ENCODE measurements at regions of chr6 and their contacts with region 1.

Region 1: DNA sequence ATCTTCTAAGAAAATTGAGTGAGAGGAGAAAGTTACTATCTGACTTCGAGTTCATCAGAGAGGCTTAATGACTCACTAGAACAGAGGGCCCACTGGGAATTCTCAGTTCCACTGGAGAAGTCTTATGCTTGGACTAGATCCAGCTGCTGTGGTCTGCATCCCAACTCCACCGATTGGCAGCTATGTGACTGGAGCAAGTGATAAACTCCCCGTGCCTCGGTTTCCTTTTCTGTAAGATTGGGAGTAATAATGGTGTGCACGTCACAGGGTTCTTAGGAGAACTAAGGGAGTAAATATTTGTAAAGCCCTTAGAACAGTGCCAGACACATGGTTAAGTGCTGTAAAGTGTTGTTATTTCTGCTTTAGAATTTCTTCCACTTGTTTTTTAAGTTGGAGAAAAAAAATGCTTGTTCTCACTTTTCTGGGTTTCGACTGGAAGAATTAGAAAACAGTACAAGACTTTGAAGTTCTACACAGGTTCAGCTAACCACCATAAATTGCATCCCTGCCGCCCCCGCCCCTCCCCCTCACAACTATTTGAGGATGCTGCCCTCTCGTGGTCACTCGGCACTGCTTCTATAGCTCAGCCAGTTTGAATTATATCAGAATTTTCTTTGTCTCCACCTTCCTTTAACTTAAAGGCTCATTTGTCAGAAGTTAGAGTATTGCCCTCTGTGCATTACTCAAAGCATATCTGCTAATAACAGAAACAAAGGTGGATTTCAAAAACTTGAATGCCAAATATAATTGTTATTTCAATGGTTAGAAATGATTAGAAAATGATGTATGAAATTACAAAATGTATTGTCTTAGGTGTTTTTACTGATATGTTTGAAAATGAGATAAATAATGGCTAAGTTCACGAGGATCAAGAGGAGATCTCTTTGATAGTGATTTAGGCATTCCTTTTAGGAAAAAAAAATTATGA is 95.0 kb upstream of the IFNGR1 start:
- DNase-seq: peak; percentile 64
- CTCF ChIP-seq: peak; percentile 82

Region 2: DNA sequence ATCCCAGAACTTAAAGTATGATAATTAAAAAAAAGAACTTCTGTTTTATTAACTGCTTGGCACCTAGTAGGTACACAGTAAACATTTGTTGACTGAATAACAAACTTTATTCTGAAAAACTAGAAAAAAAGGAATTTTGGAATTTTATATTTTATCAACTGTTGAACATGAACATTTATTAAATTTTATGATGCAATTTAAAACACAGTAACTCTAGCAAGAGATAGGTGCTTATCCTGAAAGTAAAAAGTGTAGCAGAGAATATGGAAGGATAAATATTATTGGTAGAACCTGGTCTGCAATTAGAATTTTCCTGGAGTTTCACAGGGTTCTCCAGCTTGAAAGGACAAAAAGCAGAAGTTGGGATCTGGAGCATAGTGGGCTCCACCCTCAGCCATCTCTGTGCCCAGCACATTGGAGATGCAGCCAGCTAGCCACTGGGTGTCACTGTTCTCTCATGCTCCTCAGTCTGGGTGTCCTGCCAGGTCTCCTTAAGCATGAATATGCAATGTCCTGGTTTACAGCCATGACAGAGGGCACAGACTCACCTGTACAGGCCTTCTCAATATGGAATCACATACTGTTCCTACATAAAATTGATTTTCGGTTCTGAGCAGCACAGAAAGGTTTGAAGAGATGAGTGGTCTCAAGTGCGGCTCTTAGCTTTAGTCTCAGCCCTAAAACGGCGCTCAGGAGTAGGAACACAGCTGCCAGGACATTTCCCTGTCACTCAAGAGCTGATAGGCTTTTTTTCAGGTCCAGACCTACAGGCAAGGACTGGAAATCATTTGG is 237.7 kb before region 1 on chr6:
- CTCF ChIA-PET with region 1: interaction called, 24 read pairs
- POLR2A ChIA-PET with region 1: no interaction called
- DNase-seq: peak; percentile 70
- CTCF ChIP-seq: peak; percentile 89

Region 3: DNA sequence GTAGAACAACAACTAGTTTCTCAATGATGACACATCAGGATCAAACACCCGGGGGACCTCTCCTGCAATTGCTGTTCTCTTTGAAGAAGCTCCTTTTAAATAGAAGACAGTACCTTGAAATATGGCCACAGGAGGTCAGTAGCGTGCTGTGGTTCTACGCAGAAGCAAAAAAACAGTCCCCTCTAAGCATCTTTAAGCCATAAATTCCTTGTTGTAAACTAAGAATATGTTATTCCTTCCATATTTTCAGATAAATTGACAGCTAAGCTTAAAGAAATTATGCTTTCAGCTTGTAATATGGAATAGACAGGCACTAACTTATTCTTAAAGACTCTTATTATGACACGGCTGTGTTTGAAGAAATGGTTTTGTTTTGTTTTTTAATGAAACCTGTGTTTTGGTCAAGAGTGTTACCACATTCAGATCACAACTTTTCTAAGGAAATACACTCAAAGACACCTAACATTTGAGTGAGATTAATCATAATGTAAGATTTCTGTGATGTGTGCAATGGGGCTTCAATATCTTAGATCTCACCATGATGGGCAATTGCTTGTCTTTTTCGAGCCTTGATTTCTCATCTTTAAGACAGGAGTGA is 219.7 kb before region 1 on chr6:
- CTCF ChIA-PET with region 1: interaction called, 40 read pairs
- POLR2A ChIA-PET with region 1: no interaction called
- DNase-seq: peak; percentile 43
- CTCF ChIP-seq: peak; percentile 66

Region 4: DNA sequence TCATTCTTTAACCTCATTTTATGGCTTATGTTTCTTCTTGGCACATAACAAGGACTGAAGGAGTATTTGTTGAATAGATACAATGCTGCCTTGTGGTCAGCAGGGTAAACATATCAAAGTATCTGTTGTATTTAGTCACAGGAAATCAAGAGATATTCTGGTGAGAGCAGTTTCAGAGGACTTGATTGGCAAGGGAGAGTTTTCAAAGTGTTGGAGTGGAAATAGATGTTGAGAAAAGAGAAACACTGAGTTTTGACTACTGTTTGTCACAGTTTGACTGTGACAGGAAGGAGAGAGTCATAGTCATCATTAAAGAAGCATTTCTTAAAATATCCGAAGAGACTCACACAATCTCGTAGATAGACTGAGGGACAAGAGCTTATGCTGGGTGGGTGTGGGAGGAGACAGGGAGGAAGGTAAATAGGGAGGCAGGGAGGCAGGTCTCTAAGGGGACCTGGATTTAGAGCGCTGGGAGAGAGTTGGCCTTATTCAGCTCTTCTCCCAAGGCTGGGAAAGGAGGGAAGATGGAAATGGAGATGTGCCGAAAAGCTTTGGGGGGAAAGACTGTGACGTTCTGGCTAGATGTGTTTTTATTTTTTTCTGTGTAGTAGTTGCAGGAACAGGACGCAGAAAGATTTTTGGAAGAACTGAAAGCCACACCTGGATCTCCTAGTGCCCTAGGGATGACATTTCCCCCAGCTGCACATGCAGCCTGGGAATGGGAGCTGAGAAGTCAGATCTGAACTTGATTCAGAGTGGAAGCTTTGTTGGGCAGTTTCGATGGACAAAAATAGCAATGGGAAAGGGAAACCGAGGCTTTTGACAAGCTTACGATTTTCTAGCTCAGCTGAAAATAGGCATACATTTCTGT is 30.0 kb before region 1 on chr6:
- CTCF ChIA-PET with region 1: interaction called, 15 read pairs
- POLR2A ChIA-PET with region 1: no interaction called
- DNase-seq: peak; percentile 56
- CTCF ChIP-seq: no peak

Region 5: DNA sequence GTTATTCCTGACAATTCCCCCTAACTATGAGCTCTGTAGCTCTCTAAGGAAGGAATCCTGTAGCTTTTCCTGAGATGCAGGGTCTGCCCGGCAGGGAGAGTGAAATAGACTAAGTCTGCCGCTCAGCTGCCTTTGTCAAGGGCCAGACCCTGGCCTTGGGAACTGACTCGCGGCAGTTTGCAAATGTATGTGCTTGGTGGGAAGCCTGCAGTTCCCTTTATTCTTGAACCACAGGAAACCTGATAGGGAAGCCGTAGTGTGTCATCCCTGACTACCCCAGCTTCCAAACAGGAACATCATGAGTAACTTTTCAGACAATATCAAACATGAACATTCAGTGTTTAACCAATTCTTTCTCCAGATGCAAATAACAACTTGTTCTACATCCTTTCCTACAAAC is 16.3 kb before region 1 on chr6:
- CTCF ChIA-PET with region 1: interaction called, 16 read pairs
- POLR2A ChIA-PET with region 1: no interaction called
- DNase-seq: no peak
- CTCF ChIP-seq: no peak

Region 6: DNA sequence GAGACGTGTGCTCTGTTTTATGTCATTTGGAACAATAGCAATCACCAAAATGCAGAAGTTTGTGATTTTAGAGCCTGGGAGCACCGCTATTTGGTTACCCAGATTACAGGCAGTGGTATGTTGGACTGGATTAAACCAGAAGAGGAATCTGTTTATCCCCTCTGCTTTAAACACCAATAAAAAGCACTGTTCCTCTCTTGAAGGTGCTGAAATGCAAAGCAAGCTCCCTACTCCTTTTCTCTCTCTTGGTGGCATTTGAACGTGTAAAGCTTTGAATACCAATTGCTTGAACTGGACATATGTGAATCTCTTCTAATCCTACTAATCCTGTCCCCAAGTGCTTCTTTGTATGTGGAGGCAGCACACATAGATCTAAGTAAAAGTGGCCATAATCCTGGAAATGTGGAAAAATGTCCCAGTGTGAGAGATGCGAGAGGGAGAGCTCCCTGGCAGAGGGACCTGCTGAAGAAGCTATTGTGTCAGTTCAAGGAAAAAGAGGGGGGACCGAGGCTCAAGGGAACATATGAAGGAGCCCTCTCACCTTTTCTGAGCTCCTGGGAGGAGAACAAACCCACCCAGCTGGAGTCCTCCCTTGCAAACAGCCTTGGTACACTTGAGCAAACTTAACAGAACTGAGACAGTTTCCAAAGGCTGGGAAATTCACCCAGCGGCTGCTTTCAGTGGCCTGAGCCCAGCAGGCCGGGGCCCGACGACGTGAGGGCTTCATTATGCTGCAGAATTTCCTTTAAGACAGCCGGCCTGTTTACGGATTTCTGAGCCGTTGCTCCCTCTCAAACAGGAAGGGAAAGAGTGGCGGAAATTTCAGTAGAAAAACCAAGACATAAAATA is 198.8 kb after region 1 on chr6:
- CTCF ChIA-PET with region 1: no interaction called
- POLR2A ChIA-PET with region 1: no interaction called
- DNase-seq: no peak
- CTCF ChIP-seq: no peak

Measured in GM10248 (cell line).